Gastrocnemius medialis (tissue), 4 donors: ENCODE measurements at regions of chr12 and their contacts with region 1.

Region 1: DNA sequence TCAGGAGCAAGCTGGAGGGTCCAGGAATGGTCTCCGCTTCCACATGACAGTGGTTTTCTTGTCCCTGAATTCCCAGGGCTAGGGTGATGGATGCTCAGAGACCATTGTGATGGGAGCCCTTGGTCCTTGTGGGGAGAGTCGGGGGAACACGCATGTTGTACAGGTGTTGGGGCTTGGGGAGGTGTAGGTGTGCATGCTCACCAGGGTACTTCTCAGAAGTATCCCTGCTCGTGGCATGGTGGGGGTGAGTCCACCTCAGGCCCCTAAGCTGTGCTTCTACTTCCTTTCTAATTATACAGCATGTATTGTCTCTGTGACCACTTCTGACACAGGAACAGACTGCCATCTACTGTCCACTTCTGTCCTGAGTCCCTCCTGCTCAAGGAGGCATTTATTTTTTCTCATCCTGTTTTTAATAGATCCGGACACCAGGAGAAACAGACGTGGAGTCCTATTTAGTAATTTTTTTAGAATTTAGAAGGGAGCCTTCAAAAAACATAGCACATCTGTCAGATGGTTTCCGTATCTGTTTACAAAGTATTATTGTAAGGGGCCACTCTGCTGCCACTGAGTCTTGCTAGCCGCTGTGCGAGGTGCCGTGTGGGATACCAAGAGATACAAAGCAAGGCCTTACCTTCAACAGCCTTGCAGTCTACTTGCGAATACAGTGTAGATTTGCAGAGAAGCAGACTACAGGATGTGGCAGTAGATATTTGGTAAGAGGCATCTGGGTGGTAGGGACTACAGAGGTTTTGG is 10.5 kb downstream of the NTF3 start:
- DNase-seq: peak; percentile 28 to 37
- ATAC-seq: peak; percentile 93 to 96
- H3K4me3 ChIP-seq: no peak overlapping the region
- H3K27ac ChIP-seq: no peak overlapping the region
- H3K4me1 ChIP-seq: peaks cover 10 to 11% of the 10 kb centered on the region in 2 donors
- H3K27me3 ChIP-seq: no peaks in the 10 kb centered on the region
- CTCF ChIP-seq: peak; percentile 54 to 82 (median 73)
- POLR2A ChIP-seq: no peak

Region 2: GRCh38 chr12:5003020-5003666 is 439.3 kb before region 1 on chr12:
- in situ Hi-C with region 1: loop called in 2 of 4 experiments (anchors 25 kb)
- intact Hi-C with region 1: no loop called
- DNase-seq: peak; percentile 41 to 62
- ATAC-seq: peak; percentile 83 to 89
- H3K4me3 ChIP-seq: no peak overlapping the region
- H3K27ac ChIP-seq: no peak overlapping the region
- H3K4me1 ChIP-seq: peaks cover 3 to 4% of the 10 kb centered on the region in 2 donors
- H3K27me3 ChIP-seq: no peaks in the 10 kb centered on the region
- CTCF ChIP-seq: peak; percentile 77 to 92 (median 86)
- POLR2A ChIP-seq: no peak

Region 3: DNA sequence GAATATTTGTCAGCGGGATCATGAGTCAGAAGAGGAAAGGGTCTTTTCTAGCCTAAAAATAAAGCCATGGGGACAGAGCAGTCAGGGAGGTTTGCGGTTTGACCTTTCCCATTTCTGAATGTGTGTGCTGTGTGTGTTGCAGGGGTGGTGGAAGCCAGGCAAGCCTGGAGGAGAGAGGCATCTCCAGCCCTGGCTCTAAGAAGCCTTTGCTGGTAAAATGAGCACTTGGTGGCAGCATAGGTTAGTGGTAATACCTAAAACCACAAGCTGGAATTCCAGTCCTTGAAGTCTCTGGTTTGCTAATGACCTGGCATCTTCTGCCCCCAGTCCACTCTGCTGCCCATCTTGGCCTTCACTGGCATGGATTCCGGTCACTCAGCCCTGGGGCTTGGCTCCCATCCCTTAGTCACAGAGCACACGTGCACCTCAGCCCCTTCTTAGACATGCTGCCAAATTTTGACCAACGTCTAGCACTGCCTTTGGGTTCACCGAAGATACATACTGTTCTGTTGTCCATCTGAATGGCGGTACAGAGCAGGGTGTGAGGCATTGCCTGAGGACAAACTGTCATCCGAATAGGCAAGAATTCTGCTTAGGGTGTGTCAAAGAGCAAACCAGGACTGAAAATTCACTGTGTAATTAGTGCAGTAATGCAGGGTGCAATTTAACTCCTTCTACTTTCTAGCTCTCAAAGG is 346.0 kb before region 1 on chr12:
- in situ Hi-C with region 1: no loop called
- intact Hi-C with region 1: loop called (anchors 2 kb)
- DNase-seq: no peak
- ATAC-seq: no peak
- H3K4me3 ChIP-seq: no peak overlapping the region
- H3K27ac ChIP-seq: no peak overlapping the region
- H3K4me1 ChIP-seq: no peaks in the 10 kb centered on the region
- H3K27me3 ChIP-seq: peaks cover 5 to 14% (median 6%) of the 10 kb centered on the region in 3 donors
- CTCF ChIP-seq: no peak
- POLR2A ChIP-seq: no peak

Region 4: DNA sequence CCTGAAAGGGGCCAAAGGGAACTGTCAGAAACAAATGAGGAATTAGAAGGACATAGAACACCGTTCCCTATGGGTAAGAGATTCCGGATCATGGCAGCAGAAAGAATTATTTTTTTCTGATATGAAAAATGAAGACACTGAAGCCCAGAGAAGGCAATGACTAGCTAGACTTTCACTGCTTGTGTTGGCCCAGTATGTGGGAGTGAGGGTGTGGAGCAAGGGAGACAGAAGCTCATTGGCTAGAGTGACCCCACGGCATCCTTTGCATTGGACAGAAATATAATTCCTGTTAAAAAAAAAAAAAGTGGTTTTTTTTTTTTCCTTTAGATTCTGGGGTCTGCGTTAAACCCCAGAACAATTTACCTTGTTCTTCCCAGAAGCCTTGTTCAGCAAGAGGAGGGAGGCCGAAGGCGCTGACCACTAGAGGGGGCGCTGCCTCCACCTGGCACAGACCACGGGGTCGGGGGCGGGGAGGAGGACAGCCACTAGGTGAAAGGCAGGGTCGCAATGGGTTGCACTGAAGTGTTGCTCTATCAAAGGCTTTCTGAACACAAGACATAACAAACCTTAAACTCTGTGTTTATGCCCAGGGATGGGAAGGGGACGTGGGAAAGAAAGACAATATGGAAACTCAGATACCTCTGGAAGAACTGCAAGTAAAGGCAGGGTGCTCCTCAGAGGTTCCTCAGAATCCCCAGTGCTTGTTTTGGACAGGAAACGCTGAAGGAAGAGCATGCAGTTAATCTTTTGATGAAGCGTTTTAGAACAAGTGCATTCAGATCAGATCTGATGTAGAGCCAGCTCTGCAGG is 241.9 kb before region 1 on chr12:
- in situ Hi-C with region 1: loop called (anchors 10 to 25 kb)
- intact Hi-C with region 1: loop called (anchors 1 kb)
- DNase-seq: peak in 1 of 2 donors; percentile 26
- ATAC-seq: peak; percentile 56 to 75
- H3K4me3 ChIP-seq: no peak overlapping the region
- H3K27ac ChIP-seq: no peak overlapping the region
- H3K4me1 ChIP-seq: peaks cover 0 to 5% of the 10 kb centered on the region in 2 donors
- H3K27me3 ChIP-seq: no peaks in the 10 kb centered on the region
- CTCF ChIP-seq: peak; percentile 43 to 84 (median 64)
- POLR2A ChIP-seq: no peak